Body of pancreas (tissue), 4 donors: ENCODE measurements at regions of chr5 and their contacts with region 1.

Region 1: GRCh38 chr5:142758056-142758795 is 12.0 kb upstream of the ARHGAP26 start:
- DNase-seq: peak in 1 of 4 donors; percentile 42
- ATAC-seq: no peak
- H3K4me3 ChIP-seq: no peak overlapping the region
- H3K27ac ChIP-seq: no peak overlapping the region
- H3K4me1 ChIP-seq: peaks cover 11% of the 10 kb centered on the region
- H3K27me3 ChIP-seq: no peaks in the 10 kb centered on the region
- CTCF ChIP-seq: no peak
- POLR2A ChIP-seq: no peak

Region 2: GRCh38 chr5:141914199-141914743 is 844.0 kb before region 1 on chr5:
- intact Hi-C with region 1: no loop called
- DNase-seq: peak; percentile 33 to 59 (median 42)
- ATAC-seq: peak; percentile 47
- H3K4me3 ChIP-seq: no peak overlapping the region
- H3K27ac ChIP-seq: no peak overlapping the region
- H3K4me1 ChIP-seq: peaks cover 9% of the 10 kb centered on the region
- H3K27me3 ChIP-seq: no peaks in the 10 kb centered on the region
- CTCF ChIP-seq: peak in 3 of 7 experiments; percentile 19 to 38 (median 27)
- POLR2A ChIP-seq: no peak

Region 3: GRCh38 chr5:142644640-142645361 is 113.4 kb before region 1 on chr5:
- intact Hi-C with region 1: no loop called
- DNase-seq: peak in 1 of 4 donors; percentile 17
- ATAC-seq: peak; percentile 67
- H3K4me3 ChIP-seq: no peak overlapping the region
- H3K27ac ChIP-seq: no peak overlapping the region
- H3K4me1 ChIP-seq: no peaks in the 10 kb centered on the region
- H3K27me3 ChIP-seq: no peaks in the 10 kb centered on the region
- CTCF ChIP-seq: no peak
- POLR2A ChIP-seq: no peak

Region 4: DNA sequence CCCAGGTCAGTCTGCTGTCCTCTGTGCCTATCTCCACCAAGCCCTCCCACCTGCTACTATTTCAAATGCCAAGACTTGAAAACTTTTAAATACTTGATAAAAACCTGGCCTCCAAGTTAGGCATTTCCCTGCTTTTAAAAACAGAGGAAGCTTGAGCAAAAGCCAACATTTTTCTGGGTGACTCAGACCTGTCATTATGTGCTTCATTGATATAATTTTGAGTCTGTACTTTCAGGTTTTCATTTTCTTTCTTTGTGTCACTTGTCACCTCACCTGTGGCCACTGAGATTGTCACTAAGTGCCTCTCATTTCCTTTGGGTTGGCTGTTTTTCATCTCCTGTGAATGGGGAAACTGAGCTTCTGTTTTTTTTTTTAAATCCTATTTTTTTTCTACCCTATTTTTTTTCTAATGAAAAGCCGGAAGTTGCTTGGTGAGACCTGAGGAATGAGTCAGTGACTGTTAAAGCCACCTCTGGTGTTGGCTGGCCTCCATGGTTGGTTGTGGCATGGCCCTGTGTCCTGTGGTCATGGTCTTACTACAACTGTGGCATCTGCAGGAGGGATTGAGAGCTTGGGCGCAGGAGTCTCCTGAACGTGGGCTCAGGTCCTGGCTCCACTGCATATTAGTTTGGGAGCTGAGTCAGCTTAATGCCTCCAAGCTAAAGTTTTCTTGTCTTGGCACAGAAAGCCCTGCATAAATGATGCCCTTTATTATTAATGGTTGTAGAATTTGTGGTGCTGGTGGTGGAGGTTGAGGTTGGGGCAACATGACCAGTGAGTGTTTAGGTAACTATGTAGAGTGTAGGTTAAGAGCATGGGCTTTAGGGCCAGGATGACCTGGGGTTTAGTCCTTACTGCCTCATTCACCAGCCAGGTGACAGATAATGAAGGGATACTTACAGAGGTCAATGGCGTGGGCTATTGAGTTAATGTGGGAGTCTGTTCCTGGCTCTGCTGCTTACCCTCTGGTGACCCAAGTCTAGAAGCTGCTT is 68.8 kb after region 1 on chr5:
- intact Hi-C with region 1: no loop called
- DNase-seq: peak in 3 of 4 donors; percentile 47 to 72 (median 49)
- ATAC-seq: peak; percentile 51
- H3K4me3 ChIP-seq: no peak overlapping the region
- H3K27ac ChIP-seq: peak overlapping the region in 3 of 4 donors; percentile 44 to 72 (median 67)
- H3K4me1 ChIP-seq: peaks cover 56% of the 10 kb centered on the region
- H3K27me3 ChIP-seq: no peaks in the 10 kb centered on the region
- CTCF ChIP-seq: no peak
- POLR2A ChIP-seq: no peak

Region 5: DNA sequence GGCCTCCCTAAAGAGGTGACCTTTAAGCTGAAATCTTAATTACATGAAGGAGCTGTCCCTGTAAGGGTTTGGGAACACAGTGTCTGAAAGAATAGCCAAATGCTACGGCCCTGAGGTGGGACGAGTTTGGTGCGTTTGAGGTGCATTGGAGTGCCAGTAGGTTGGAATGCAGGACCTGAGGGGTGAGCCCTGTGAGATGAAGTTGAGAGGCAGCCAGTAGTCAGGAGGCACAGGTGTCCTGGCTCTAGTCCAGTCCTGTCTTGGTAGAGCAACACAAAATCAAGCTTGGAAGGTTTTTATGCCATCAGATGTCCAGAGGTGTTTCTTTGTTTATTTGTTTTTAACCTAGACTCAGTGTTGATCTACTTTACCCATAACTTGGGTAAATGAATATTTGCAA is 120.4 kb after region 1 on chr5:
- intact Hi-C with region 1: loop called (anchors 5 kb)
- DNase-seq: peak in 2 of 4 donors; percentile 42 to 47
- ATAC-seq: no peak
- H3K4me3 ChIP-seq: no peak overlapping the region
- H3K27ac ChIP-seq: no peak overlapping the region
- H3K4me1 ChIP-seq: peaks cover 30% of the 10 kb centered on the region
- H3K27me3 ChIP-seq: no peaks in the 10 kb centered on the region
- CTCF ChIP-seq: no peak
- POLR2A ChIP-seq: no peak

Region 6: GRCh38 chr5:142938266-142938880 is 180.1 kb after region 1 on chr5:
- intact Hi-C with region 1: no loop called
- DNase-seq: no peak
- ATAC-seq: no peak
- H3K4me3 ChIP-seq: no peak overlapping the region
- H3K27ac ChIP-seq: no peak overlapping the region
- H3K4me1 ChIP-seq: peaks cover 31% of the 10 kb centered on the region
- H3K27me3 ChIP-seq: no peaks in the 10 kb centered on the region
- CTCF ChIP-seq: no peak
- POLR2A ChIP-seq: no peak